ENCODE measurements at regions of chr2 and their contacts with region 1.

Region 1: DNA sequence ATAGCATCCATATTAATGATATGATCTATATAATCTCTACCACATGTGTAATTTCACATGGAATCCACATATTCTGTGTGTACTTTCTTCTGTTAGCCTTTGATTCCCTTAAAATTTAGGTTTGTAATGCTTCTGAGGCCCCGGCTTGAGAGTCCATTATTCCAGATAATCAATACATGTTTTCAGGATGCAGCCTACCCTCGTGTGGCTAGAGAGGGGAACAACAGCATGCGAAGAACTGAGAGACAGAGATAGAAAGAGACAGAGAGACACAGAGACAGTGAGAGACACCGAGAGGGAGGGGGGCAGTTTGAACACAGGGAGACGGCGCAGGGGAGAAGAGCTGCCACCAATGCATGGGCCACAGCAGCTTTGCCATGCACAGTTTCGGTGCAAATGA is 185.4 kb downstream of the SNTG2 start:
- DNase-seq: no peak
- ATAC-seq: peak in 2 of 4 donors; percentile 77 to 79
- H3K4me3 ChIP-seq: no peak overlapping the region
- H3K27ac ChIP-seq: no peak overlapping the region
- H3K4me1 ChIP-seq: no peaks in the 10 kb centered on the region
- H3K27me3 ChIP-seq: no peaks in the 10 kb centered on the region
- CTCF ChIP-seq: peak in 3 of 4 donors; percentile 18 to 31 (median 19)

Region 2: GRCh38 chr2:854460-854859 is 281.6 kb before region 1 on chr2:
- intact Hi-C with region 1: loop called in 1 of 3 experiments (anchors 10 kb)
- DNase-seq: peak in 5 of 6 donors; percentile 44 to 86 (median 69)
- ATAC-seq: peak; percentile 55 to 81 (median 74)
- H3K4me3 ChIP-seq: no peak overlapping the region
- H3K27ac ChIP-seq: no peak overlapping the region
- H3K4me1 ChIP-seq: no peaks in the 10 kb centered on the region
- H3K27me3 ChIP-seq: no peaks in the 10 kb centered on the region
- CTCF ChIP-seq: peak; percentile 44 to 66 (median 54)

Measured in pancreas (tissue), 10 donors.